ENCODE measurements at regions of chr7 and their contacts with region 1.

Region 1: GRCh38 chr7:67625257-67625737 is 628.7 kb downstream of the TYW1 start:
- DNase-seq: peak; percentile 88
- ATAC-seq: peak; percentile 95

Region 2: DNA sequence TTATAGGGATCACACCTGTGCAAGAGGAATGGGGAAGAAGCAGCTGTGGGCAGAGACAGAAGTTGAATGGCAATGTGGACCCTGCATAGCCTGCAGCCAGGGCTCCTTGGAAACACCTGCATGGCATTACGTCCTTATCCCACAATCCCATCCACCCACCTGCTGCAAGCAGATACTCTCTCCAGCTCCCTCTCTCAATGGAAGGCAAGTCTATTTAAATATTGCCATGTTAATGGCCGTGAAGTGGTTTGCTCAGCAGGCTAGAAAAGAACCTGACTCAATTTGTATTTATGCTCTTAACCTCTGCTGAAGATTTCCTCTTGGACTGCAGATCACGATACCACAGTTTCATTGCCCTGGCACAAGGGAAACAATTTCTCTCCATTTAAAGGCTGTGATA is 211.6 kb before region 1 on chr7:
- intact Hi-C with region 1: no loop called
- DNase-seq: no peak
- ATAC-seq: no peak

Region 3: DNA sequence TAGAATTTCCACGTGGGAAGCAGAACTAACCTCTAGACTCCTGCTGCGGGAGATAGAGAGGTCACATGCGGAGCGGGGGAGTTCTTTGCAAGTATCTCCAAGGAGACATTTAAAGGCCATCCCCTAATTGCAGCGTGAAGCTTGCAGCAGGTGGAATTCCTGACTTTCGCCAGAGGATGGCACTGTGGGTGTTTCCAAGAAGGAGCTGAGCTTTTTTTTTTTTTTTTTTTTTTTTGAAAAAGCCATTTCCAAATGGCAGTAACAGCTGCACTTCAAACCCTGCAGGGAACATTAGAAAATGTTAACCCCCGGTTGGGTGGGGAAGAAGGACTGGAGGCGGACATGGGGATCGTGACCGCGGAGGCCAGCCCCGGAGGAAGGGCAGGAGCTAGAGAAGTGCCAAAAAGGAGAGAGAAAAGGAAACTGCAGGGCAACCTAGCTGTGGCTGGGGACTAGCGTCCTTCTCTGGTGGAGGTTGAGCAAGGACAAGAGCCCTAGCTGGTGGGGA is 141.0 kb before region 1 on chr7:
- intact Hi-C with region 1: loop called (anchors 10 kb)
- DNase-seq: peak; percentile 55
- ATAC-seq: peak; percentile 59

Region 4: GRCh38 chr7:67692425-67692824 is 67.1 kb after region 1 on chr7:
- intact Hi-C with region 1: no loop called
- DNase-seq: no peak
- ATAC-seq: no peak

Region 5: GRCh38 chr7:67882843-67883242 is 257.5 kb after region 1 on chr7:
- intact Hi-C with region 1: no loop called
- DNase-seq: no peak
- ATAC-seq: no peak

Measured in Right ventricle myocardium superior (tissue), 1 donor.